Sigmoid colon (tissue), 7 donors: ENCODE measurements at regions of chr5 and their contacts with region 1.

Region 1: GRCh38 chr5:142012792-142013388 is at the start of gene GNPDA1:
- DNase-seq: peak; percentile 93
- H3K4me3 ChIP-seq: peak within 1 kb of the TSS; percentile 71 to 83 (median 76)
- H3K27ac ChIP-seq: peak within 1 kb of the TSS; percentile 83 to 87 (median 86)
- H3K4me1 ChIP-seq: peaks cover 0 to 29% (median 18%) of the 10 kb centered on the region in 4 donors
- H3K27me3 ChIP-seq: no peaks in the 10 kb centered on the region
- CTCF ChIP-seq: no peak
- EP300 ChIP-seq: no peak
- POLR2A ChIP-seq: peak in 1 of 2 donors; percentile 6
- total RNA-seq, gene GNPDA1: 23.0 to 58.1 (median 27.7) TPM

Region 2: DNA sequence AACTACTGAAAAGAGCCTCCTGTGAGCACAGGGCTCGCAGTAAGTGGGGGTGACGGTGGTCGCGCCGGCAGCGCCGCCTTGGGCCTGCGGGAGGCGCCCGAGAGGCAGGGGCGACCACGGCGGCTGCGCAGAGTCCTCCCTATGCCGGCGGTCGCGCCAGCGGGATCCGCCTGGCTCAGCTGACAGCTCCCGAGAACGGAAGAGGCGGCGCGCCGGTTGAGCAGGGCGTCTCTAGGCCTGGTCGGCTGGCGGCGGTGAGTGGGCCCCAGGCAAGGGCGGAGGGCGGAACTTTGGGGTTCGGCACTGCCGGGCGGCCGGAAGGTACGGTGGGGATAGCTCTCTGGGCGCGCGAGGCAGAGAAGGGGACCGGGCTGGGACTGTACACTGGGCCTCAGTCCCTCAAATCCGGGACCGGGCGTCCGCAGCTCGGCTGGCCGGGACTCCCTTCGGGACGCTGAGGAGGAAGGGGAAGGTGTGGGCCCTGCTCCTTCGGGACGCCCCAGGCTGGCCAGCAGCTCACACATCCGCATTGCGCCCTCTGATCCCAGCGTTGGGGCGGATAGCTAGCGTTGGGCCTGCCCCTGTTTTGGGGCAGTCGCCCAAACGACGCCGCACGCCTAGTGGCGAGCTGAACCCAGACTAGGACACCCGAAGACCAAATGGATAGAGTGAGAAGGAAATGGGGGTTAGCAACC is 43.8 kb before region 1 on chr5 and contains the start of gene RNF14:
- intact Hi-C with region 1: loop called (anchors 2 kb)
- DNase-seq: peak; percentile 96
- H3K4me3 ChIP-seq: peak within 1 kb of the TSS; percentile 65 to 84 (median 70)
- H3K27ac ChIP-seq: peak within 1 kb of the TSS; percentile 94 to 96 (median 94)
- H3K4me1 ChIP-seq: peaks cover 0 to 29% (median 24%) of the 10 kb centered on the region in 4 donors
- H3K27me3 ChIP-seq: no peaks in the 10 kb centered on the region
- CTCF ChIP-seq: peak; percentile 86 to 96 (median 95)
- EP300 ChIP-seq: no peak
- POLR2A ChIP-seq: peak; percentile 70 to 87
- total RNA-seq, gene RNF14: 30.7 to 70.1 (median 53.5) TPM

Region 3: GRCh38 chr5:142108432-142109330 is 95.8 kb after region 1 on chr5 and contains the start of gene NDFIP1:
- intact Hi-C with region 1: loop called (anchors 2 kb)
- DNase-seq: peak; percentile 91
- H3K4me3 ChIP-seq: peak within 1 kb of the TSS; percentile 60 to 77 (median 71)
- H3K27ac ChIP-seq: peak within 1 kb of the TSS; percentile 96 to 97 (median 96)
- H3K4me1 ChIP-seq: peaks cover 0 to 29% (median 18%) of the 10 kb centered on the region in 4 donors
- H3K27me3 ChIP-seq: no peaks in the 10 kb centered on the region
- CTCF ChIP-seq: peak in 1 of 4 experiments; percentile 21
- EP300 ChIP-seq: no peak
- POLR2A ChIP-seq: peak; percentile 43 to 51
- total RNA-seq, gene NDFIP1: 47.8 to 88.5 (median 64.0) TPM

Region 4: DNA sequence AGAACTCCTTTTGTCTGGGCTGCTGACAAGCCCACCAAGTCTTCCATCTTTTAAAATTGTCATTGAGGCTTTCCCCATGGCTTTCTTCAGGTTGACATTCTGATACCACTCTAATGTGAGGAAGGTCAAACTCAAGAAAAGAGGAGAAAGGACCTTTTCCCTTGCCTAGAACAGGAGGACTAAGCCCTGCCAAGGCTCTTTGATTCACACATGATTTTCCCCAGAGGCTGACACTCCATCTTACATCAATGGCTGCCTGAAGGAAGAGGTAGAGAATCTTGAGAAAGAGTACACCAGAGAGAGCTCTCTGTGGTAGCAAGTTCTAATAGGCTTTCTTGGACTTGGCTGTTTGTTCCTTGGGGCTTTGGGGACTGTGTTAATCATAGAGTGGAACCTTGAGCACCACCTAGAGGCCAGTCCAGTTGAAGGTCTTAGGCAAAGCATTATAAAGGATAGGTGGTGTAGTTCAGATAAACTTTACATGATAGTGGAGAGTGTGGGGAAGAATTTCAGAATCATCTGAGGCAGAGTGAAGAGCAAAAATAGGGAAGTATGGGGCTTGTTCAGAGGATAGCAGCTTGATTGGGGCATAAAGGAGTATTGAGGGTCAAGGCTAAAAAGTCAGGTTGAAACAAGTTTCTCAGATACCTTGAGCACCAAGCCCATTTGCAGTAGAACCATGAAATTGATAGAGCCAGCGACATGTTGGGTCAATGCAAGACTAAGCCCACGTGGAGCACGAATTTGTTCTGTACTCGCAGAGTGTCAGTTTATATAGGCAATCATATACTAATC is 132.4 kb after region 1 on chr5:
- intact Hi-C with region 1: loop called (anchors 5 kb)
- DNase-seq: peak; percentile 69
- H3K4me3 ChIP-seq: no peak overlapping the region
- H3K27ac ChIP-seq: no peak overlapping the region
- H3K4me1 ChIP-seq: no peaks in the 10 kb centered on the region
- H3K27me3 ChIP-seq: no peaks in the 10 kb centered on the region
- CTCF ChIP-seq: peak in 3 of 4 experiments; percentile 47 to 64 (median 58)
- EP300 ChIP-seq: no peak
- POLR2A ChIP-seq: no peak

Region 5: DNA sequence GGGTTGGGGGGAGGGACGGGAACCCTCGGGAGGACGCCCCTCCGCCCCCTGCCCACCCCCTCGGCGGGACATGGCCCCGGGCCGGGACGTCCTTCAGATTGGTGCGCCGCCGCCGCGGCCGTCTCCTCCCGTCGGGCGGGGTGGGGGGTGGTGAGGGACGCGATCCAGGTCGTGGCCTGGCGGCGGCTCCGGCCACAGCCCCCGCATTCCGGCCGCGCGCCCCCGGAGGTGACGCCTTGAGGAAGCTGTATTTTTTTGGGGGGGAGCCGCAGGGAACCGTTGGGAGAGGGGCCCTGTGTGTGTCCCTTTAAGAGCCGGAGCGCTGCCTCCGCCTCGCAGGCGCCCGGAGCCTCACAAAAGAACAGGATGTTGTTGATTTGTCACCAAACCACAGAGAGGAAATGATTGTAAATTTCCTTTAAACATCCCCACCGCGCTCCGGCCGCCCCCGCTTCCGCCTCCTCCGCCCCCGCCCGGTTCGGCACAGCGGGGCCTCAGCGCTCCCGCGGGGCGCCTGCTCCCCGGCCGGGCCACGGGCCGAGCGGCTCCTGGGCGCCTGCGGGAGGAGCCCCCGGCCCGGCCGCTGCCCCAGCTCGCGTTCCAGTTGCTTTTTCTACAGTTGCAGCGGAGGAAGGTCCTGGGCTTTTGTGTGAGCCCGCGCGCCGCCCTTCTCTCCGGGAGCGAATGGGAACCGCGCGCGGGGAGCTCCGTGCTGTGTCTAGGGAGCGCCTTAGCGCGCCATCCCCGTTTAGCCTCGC is 344.0 kb after region 1 on chr5:
- intact Hi-C with region 1: loop called (anchors 10 kb)
- DNase-seq: peak; percentile 93
- H3K4me3 ChIP-seq: peak overlapping the region; percentile 46 to 68 (median 58)
- H3K27ac ChIP-seq: peak overlapping the region; percentile 72 to 97 (median 82)
- H3K4me1 ChIP-seq: peaks cover 0 to 20% (median 11%) of the 10 kb centered on the region in 4 donors
- H3K27me3 ChIP-seq: no peaks in the 10 kb centered on the region
- CTCF ChIP-seq: no peak
- EP300 ChIP-seq: no peak
- POLR2A ChIP-seq: no peak